Natural killer cell (primary cell): ENCODE measurements at regions of chr17 and their contacts with region 1.

Region 1: DNA sequence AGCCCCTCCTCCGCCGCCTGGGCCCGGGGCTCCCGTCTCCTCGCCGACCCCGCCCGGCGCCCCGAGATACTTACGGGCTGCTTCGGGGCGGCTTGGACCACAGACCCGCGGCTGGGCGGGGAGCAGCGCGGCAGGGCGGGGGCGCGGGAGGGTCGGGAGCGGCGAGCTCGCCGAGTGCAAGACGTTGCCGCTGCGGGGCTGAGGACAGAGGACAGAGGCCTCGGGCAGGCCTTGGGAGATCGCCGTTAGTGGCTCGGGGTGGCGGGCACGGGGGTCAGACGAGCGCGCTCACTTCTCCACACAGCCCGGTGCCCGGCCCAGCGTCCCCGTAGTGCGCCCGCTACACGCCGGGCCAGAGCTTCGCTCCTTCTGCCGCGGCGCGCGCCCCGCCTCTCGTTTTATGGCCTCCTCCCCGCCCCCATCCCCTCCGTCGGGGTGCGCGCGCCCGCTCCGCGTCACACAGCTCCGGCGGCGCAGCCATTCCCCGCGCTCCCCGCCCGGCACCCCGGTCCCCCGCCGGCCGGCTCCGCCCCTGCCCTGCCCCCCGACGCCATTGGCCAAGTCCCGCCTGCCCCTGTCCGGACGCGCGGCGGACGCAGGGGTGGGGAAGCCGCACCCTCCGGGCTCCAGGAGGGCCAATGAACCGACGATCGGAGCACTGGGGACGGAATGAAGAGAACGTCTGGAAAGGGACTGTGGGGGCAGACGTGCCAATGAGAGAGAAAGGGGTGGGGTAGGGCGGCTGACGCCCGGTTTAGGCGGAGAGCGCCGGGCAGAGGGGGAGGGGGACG is at the start of gene TOB1:
- DNase-seq: peak; percentile 94 to 97
- ATAC-seq: peak; percentile 78 to 92 (median 84)
- H3K4me3 ChIP-seq: peak within 1 kb of the TSS; percentile 81
- H3K4me3 Mint-ChIP-seq: peak within 1 kb of the TSS; percentile 97
- H3K27ac ChIP-seq: peak within 1 kb of the TSS; percentile 93
- H3K27ac Mint-ChIP-seq: peak within 1 kb of the TSS; percentile 89 to 95
- H3K4me1 ChIP-seq: peaks cover 31% of the 10 kb centered on the region
- H3K4me1 Mint-ChIP-seq: peaks cover 44 to 48% of the 10 kb centered on the region in 2 donors
- H3K27me3 ChIP-seq: no peaks in the 10 kb centered on the region
- H3K27me3 Mint-ChIP-seq: peaks cover 0 to 10% of the 10 kb centered on the region in 2 donors
- CTCF ChIP-seq: no peak
- total RNA-seq, gene TOB1: 51.1 to 123 (median 110) TPM

Region 2: GRCh38 chr17:50853015-50853615 is 13.1 kb before region 1 on chr17:
- intact Hi-C with region 1: loop called (anchors 1 kb)
- DNase-seq: no peak
- ATAC-seq: no peak
- H3K4me3 ChIP-seq: no peak overlapping the region
- H3K4me3 Mint-ChIP-seq: peak overlapping the region; percentile 84
- H3K27ac ChIP-seq: no peak overlapping the region
- H3K27ac Mint-ChIP-seq: peak overlapping the region; percentile 77 to 87
- H3K4me1 ChIP-seq: peaks cover 11% of the 10 kb centered on the region
- H3K4me1 Mint-ChIP-seq: peaks cover 15 to 16% of the 10 kb centered on the region in 2 donors
- H3K27me3 ChIP-seq: no peaks in the 10 kb centered on the region
- H3K27me3 Mint-ChIP-seq: peaks cover 6 to 20% of the 10 kb centered on the region in 2 donors
- CTCF ChIP-seq: no peak

Region 3: GRCh38 chr17:50909765-50910605 is 43.8 kb after region 1 on chr17:
- intact Hi-C with region 1: loop called (anchors 2 kb)
- DNase-seq: peak; percentile 36 to 88
- ATAC-seq: peak; percentile 87 to 92 (median 91)
- H3K4me3 ChIP-seq: no peak overlapping the region
- H3K4me3 Mint-ChIP-seq: peak overlapping the region; percentile 55
- H3K27ac ChIP-seq: peak overlapping the region; percentile 79
- H3K27ac Mint-ChIP-seq: peak overlapping the region; percentile 85 to 91
- H3K4me1 ChIP-seq: peaks cover 51% of the 10 kb centered on the region
- H3K4me1 Mint-ChIP-seq: peaks cover 16 to 34% of the 10 kb centered on the region in 2 donors
- H3K27me3 ChIP-seq: no peaks in the 10 kb centered on the region
- H3K27me3 Mint-ChIP-seq: peaks cover 4 to 8% of the 10 kb centered on the region in 2 donors
- CTCF ChIP-seq: no peak

Region 4: GRCh38 chr17:50931144-50931908 is 65.1 kb after region 1 on chr17:
- intact Hi-C with region 1: loop called (anchors 5 kb)
- DNase-seq: peak; percentile 52 to 76
- ATAC-seq: peak; percentile 87 to 90 (median 87)
- H3K4me3 ChIP-seq: peak overlapping the region; percentile 41
- H3K4me3 Mint-ChIP-seq: peak overlapping the region; percentile 94
- H3K27ac ChIP-seq: peak overlapping the region; percentile 74
- H3K27ac Mint-ChIP-seq: peak overlapping the region; percentile 84 to 92
- H3K4me1 ChIP-seq: peaks cover 21% of the 10 kb centered on the region
- H3K4me1 Mint-ChIP-seq: peaks cover 17 to 22% of the 10 kb centered on the region in 2 donors
- H3K27me3 ChIP-seq: no peaks in the 10 kb centered on the region
- H3K27me3 Mint-ChIP-seq: peaks cover 0 to 23% of the 10 kb centered on the region in 2 donors
- CTCF ChIP-seq: no peak

Region 5: DNA sequence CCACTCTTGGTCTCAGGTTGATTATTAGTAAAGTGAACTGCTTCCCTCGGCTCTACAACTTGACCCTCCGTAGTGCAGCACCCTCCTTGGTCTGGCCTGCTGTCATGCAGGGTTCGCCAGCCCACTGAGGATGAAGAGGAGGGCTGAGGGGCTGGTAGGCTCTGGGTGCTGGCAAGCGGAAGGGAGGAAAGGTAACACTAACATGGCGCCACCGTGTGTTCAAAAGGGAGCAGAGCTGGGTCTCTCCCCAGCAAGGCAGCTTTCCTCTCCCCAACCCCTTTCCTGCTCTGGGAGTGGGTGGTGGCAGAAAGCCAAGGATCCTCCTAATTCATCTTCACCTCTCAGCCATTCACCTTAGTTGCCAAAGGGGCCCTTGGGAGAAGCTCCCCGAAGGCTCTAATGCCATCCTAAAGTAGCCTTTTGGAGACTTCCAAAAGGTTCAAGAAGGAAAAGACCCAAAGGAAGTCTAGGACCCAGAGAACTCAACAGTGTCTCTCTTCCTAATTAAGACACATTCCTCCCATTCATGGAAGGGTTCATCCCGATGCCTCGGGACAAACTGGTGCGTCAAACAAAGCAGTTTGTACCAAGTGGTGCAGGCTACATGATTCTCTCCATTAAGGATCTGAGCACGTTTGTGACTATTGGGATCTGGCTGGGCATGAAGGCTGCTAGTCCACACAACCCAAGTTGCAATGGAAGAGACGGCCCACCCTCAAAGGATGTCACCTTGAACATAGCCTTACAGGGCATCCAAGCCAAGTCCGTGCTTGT is 90.8 kb after region 1 on chr17:
- intact Hi-C with region 1: loop called (anchors 1 kb)
- DNase-seq: peak; percentile 53 to 85
- ATAC-seq: peak; percentile 86 to 99 (median 94)
- H3K4me3 ChIP-seq: no peak overlapping the region
- H3K4me3 Mint-ChIP-seq: no peak overlapping the region
- H3K27ac ChIP-seq: no peak overlapping the region
- H3K27ac Mint-ChIP-seq: peak overlapping the region in 1 of 2 donors; percentile 45
- H3K4me1 ChIP-seq: peaks cover 6% of the 10 kb centered on the region
- H3K4me1 Mint-ChIP-seq: peaks cover 0 to 5% of the 10 kb centered on the region in 2 donors
- H3K27me3 ChIP-seq: no peaks in the 10 kb centered on the region
- H3K27me3 Mint-ChIP-seq: peaks cover 2 to 6% of the 10 kb centered on the region in 2 donors
- CTCF ChIP-seq: peak; percentile 75

Region 6: DNA sequence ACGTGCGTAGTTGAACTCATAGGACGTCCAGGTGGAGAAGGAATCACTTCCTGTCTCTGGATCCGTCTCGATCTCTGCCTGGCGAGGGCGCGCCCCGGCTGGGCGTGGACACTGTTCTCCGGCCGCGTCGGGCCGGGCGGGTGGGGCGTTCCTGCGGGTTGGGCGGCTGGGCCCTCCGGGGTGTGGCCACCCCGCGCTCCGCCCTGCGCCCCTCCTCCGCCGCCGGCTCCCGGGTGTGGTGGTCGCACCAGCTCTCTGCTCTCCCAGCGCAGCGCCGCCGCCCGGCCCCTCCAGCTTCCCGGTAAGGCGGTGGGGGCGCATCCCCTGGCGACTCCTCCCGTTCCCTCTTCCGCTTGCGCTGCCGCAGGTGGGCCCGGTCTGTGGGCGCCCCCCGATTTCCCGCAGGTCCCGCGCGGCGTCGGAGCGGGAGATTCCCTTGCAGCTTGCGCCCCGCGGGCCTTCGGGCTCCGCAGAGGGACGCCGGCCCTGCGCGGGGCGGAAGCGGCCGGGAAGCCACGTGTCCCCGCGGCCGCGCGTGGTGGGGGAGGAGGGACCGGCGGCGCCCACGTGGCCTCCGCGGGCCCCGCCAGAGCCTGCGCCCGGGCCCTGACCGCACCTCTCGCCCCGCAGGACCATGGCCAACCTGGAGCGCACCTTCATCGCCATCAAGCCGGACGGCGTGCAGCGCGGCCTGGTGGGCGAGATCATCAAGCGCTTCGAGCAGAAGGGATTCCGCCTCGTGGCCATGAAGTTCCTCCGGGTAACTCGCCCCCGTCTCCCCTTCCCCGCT is 300.2 kb after region 1 on chr17 and contains the start of gene NME2:
- intact Hi-C with region 1: loop called (anchors 5 kb)
- DNase-seq: peak; percentile 65 to 80
- ATAC-seq: peak; percentile 81 to 90 (median 89)
- H3K4me3 ChIP-seq: peak within 1 kb of the TSS; percentile 90
- H3K4me3 Mint-ChIP-seq: peak within 1 kb of the TSS; percentile 90
- H3K27ac ChIP-seq: peak within 1 kb of the TSS; percentile 70
- H3K27ac Mint-ChIP-seq: peak within 1 kb of the TSS; percentile 82 to 93
- H3K4me1 ChIP-seq: peaks cover 23% of the 10 kb centered on the region
- H3K4me1 Mint-ChIP-seq: peaks cover 10 to 25% of the 10 kb centered on the region in 2 donors
- H3K27me3 ChIP-seq: no peaks in the 10 kb centered on the region
- H3K27me3 Mint-ChIP-seq: no peaks in the 10 kb centered on the region
- CTCF ChIP-seq: no peak
- total RNA-seq, gene NME2: 100 to 109 (median 101) TPM